Activated CD4-positive, alpha-beta T cell treated with anti-CD3 and anti-CD28 coated beads for 36 hours (primary cell): ENCODE measurements at regions of chr6 and their contacts with region 1.

Region 1: GRCh38 chr6:145814501-145815308 is at the start of gene FBXO30:
- DNase-seq: peak; percentile 90
- ATAC-seq: peak; percentile 77
- H3K4me3 Mint-ChIP-seq: peak within 1 kb of the TSS; percentile 89
- H3K27ac Mint-ChIP-seq: peak within 1 kb of the TSS; percentile 89
- H3K4me1 Mint-ChIP-seq: peaks cover 37% of the 10 kb centered on the region
- H3K27me3 Mint-ChIP-seq: no peaks in the 10 kb centered on the region
- total RNA-seq, gene FBXO30: 2.3 to 2.8 TPM

Region 2: GRCh38 chr6:144349690-144350527 is 1464.8 kb before region 1 on chr6:
- CTCF ChIA-PET with region 1: no interaction called
- POLR2A ChIA-PET with region 1: no interaction called
- intact Hi-C with region 1: loop called in 1 of 2 experiments (anchors 10 kb)
- DNase-seq: no peak
- ATAC-seq: peak; percentile 45
- H3K4me3 Mint-ChIP-seq: peak overlapping the region; percentile 69
- H3K27ac Mint-ChIP-seq: peak overlapping the region; percentile 96
- H3K4me1 Mint-ChIP-seq: peaks cover 88% of the 10 kb centered on the region
- H3K27me3 Mint-ChIP-seq: no peaks in the 10 kb centered on the region

Region 3: GRCh38 chr6:144590532-144590931 is 1224.2 kb before region 1 on chr6:
- CTCF ChIA-PET with region 1: no interaction called
- POLR2A ChIA-PET with region 1: no interaction called
- intact Hi-C with region 1: loop called (anchors 10 kb)
- DNase-seq: no peak
- ATAC-seq: no peak
- H3K4me3 Mint-ChIP-seq: no peak overlapping the region
- H3K27ac Mint-ChIP-seq: no peak overlapping the region
- H3K4me1 Mint-ChIP-seq: peaks cover 17% of the 10 kb centered on the region
- H3K27me3 Mint-ChIP-seq: no peaks in the 10 kb centered on the region

Region 4: GRCh38 chr6:145714731-145715130 is 100.0 kb before region 1 on chr6:
- CTCF ChIA-PET with region 1: no interaction called
- POLR2A ChIA-PET with region 1: no interaction called
- intact Hi-C with region 1: no loop called
- DNase-seq: no peak
- ATAC-seq: no peak
- H3K4me3 Mint-ChIP-seq: no peak overlapping the region
- H3K27ac Mint-ChIP-seq: no peak overlapping the region
- H3K4me1 Mint-ChIP-seq: no peaks in the 10 kb centered on the region
- H3K27me3 Mint-ChIP-seq: no peaks in the 10 kb centered on the region

Region 5: GRCh38 chr6:145734486-145735355 is 80.0 kb before region 1 on chr6:
- CTCF ChIA-PET with region 1: interaction called, 3 read pairs
- POLR2A ChIA-PET with region 1: interaction called, 9 read pairs
- intact Hi-C with region 1: loop called (anchors 1 to 2 kb)
- DNase-seq: peak; percentile 82
- ATAC-seq: peak; percentile 70
- H3K4me3 Mint-ChIP-seq: peak overlapping the region; percentile 88
- H3K27ac Mint-ChIP-seq: peak overlapping the region; percentile 95
- H3K4me1 Mint-ChIP-seq: peaks cover 24% of the 10 kb centered on the region
- H3K27me3 Mint-ChIP-seq: no peaks in the 10 kb centered on the region

Region 6: DNA sequence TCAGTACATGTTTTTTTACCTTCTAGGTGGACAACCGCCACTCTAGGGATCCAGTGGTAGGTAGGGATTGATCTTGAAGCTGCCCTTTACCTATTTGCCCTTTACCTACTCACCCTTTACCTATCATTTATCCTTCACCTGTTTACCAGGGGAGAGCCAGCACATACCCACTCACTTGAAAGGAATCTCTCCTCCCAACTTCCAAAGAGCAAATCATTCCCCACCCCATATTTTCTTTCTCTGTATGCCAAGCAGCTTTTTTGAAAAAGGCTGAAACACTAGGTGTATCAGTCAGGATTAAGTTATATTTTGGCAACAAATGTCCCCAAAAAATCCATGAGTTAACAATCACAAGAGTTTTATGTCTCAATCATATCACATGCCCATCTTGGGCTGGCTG is 68.8 kb before region 1 on chr6:
- CTCF ChIA-PET with region 1: no interaction called
- POLR2A ChIA-PET with region 1: no interaction called
- intact Hi-C with region 1: no loop called
- DNase-seq: no peak
- ATAC-seq: no peak
- H3K4me3 Mint-ChIP-seq: no peak overlapping the region
- H3K27ac Mint-ChIP-seq: no peak overlapping the region
- H3K4me1 Mint-ChIP-seq: peaks cover 4% of the 10 kb centered on the region
- H3K27me3 Mint-ChIP-seq: no peaks in the 10 kb centered on the region

Region 7: GRCh38 chr6:145844933-145845540 is 30.3 kb after region 1 on chr6:
- CTCF ChIA-PET with region 1: no interaction called
- POLR2A ChIA-PET with region 1: no interaction called
- intact Hi-C with region 1: no loop called
- DNase-seq: no peak
- ATAC-seq: no peak
- H3K4me3 Mint-ChIP-seq: no peak overlapping the region
- H3K27ac Mint-ChIP-seq: no peak overlapping the region
- H3K4me1 Mint-ChIP-seq: no peaks in the 10 kb centered on the region
- H3K27me3 Mint-ChIP-seq: no peaks in the 10 kb centered on the region

Region 8: DNA sequence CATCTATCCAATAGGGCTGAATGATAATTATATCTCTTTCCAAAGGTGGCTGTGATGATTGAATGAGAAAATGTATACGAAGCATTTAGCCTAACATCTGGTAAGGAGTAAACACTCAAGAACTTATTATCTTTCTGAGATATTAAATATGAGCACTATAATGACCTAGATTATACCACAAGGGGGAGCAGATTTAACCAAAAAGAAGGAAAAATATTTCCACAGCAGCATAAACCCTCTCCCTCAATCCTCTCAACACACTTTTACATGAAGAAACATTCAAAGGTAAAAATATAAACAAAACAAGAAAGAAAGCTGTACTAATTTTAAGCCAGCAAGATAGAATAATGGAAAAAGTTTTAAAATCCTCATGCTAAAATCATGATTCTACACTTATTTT is 81.1 kb after region 1 on chr6:
- CTCF ChIA-PET with region 1: no interaction called
- POLR2A ChIA-PET with region 1: interaction called, 3 read pairs
- intact Hi-C with region 1: loop called in 1 of 2 experiments (anchors 5 kb)
- DNase-seq: no peak
- ATAC-seq: no peak
- H3K4me3 Mint-ChIP-seq: no peak overlapping the region
- H3K27ac Mint-ChIP-seq: no peak overlapping the region
- H3K4me1 Mint-ChIP-seq: peaks cover 4% of the 10 kb centered on the region
- H3K27me3 Mint-ChIP-seq: no peaks in the 10 kb centered on the region

Region 9: GRCh38 chr6:145963216-145964068 is 148.7 kb after region 1 on chr6:
- CTCF ChIA-PET with region 1: no interaction called
- POLR2A ChIA-PET with region 1: interaction called, 9 read pairs
- intact Hi-C with region 1: loop called (anchors 1 to 2 kb)
- DNase-seq: peak; percentile 67
- ATAC-seq: peak; percentile 34
- H3K4me3 Mint-ChIP-seq: peak overlapping the region; percentile 94
- H3K27ac Mint-ChIP-seq: peak overlapping the region; percentile 88
- H3K4me1 Mint-ChIP-seq: peaks cover 44% of the 10 kb centered on the region
- H3K27me3 Mint-ChIP-seq: no peaks in the 10 kb centered on the region

Region 10: DNA sequence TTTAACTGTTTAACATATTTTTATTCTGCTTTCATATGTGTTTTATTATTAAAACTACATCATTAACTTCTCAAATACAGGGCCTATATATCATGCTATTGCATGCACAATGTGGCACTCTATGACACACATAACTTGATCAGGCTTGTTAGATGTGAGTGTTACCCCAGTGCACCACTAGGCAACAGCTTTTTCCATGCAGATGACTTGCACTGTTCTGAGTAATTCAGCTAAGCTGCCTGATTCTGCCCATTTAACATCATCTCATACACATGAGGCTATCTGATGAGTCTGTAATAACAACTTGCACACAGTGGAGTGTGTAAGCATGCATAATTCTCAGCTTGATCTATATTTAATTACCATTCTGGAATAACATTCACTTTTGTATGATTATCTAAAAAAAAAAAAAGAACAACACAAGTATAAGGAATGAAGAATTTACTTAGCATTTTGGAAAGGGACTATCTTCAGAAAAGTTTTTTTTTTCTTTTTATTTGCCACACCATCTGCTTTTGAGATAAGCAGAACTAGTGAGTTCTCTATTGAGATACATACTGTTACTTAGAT is 297.3 kb after region 1 on chr6:
- CTCF ChIA-PET with region 1: no interaction called
- POLR2A ChIA-PET with region 1: no interaction called
- intact Hi-C with region 1: no loop called
- DNase-seq: no peak
- ATAC-seq: peak; percentile 30
- H3K4me3 Mint-ChIP-seq: no peak overlapping the region
- H3K27ac Mint-ChIP-seq: no peak overlapping the region
- H3K4me1 Mint-ChIP-seq: no peaks in the 10 kb centered on the region
- H3K27me3 Mint-ChIP-seq: peaks cover 3% of the 10 kb centered on the region